A673 (cell line): ENCODE measurements at regions of chr4 and their contacts with region 1.

Region 1: GRCh38 chr4:7987148-7987989 is 47.7 kb upstream of the AFAP1 start:
- DNase-seq: peak; percentile 82
- H3K4me3 ChIP-seq: no peak overlapping the region
- H3K27ac ChIP-seq: no peak overlapping the region
- H3K4me1 ChIP-seq: no peaks in the 10 kb centered on the region
- H3K27me3 ChIP-seq: no peaks in the 10 kb centered on the region
- CTCF ChIP-seq: peak; percentile 90

Region 2: GRCh38 chr4:7719354-7720174 is 267.8 kb before region 1 on chr4:
- CTCF ChIA-PET with region 1: no interaction called
- POLR2A ChIA-PET with region 1: no interaction called
- intact Hi-C with region 1: loop called (anchors 1 kb)
- DNase-seq: peak; percentile 69
- H3K4me3 ChIP-seq: no peak overlapping the region
- H3K27ac ChIP-seq: no peak overlapping the region
- H3K4me1 ChIP-seq: no peaks in the 10 kb centered on the region
- H3K27me3 ChIP-seq: peaks cover 7% of the 10 kb centered on the region
- CTCF ChIP-seq: peak; percentile 91

Region 3: GRCh38 chr4:7761720-7762119 is 225.6 kb before region 1 on chr4:
- CTCF ChIA-PET with region 1: interaction called, 6 read pairs
- POLR2A ChIA-PET with region 1: no interaction called
- intact Hi-C with region 1: loop called (anchors 5 kb)
- DNase-seq: peak; percentile 86
- H3K4me3 ChIP-seq: no peak overlapping the region
- H3K27ac ChIP-seq: peak overlapping the region; percentile 14
- H3K4me1 ChIP-seq: peaks cover 36% of the 10 kb centered on the region
- H3K27me3 ChIP-seq: no peaks in the 10 kb centered on the region
- CTCF ChIP-seq: peak; percentile 82

Region 4: DNA sequence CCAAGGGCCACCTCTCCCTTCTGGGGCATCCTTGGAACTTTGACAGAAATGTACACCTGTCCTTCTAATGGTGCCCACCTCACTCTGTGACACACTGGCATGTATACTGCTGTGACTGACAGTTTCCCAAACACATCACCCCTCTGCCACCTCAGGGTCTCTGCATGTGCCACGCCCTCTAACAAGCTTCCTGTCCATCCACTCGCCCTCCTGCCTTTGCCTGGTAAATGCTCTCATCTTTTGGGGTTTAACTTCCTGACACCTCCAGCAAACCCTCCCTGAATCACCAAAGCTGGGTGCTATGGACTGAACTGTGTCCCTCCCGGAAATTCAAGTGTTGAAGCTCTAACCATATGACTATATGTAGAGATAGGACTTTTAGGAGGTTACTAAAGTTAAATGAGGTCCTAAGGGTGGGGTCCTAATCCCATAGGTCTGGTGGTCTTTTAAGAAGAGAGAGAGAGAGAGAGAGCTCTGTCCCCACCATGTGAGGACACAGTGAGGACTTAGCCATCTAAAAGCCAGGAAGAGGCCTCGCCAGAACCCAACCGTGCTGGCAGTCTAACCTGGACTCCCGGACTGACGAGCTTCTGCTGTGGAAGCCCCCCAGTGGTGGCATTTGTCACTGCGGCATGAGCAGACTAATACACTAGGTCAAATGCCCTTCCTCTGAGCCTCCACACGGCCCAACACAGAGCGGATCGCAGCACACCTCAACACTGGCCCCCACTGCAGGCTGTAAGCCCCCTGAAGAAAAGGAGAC is 143.4 kb before region 1 on chr4:
- CTCF ChIA-PET with region 1: no interaction called
- POLR2A ChIA-PET with region 1: no interaction called
- intact Hi-C with region 1: loop called (anchors 5 kb)
- DNase-seq: peak; percentile 82
- H3K4me3 ChIP-seq: no peak overlapping the region
- H3K27ac ChIP-seq: peak overlapping the region; percentile 21
- H3K4me1 ChIP-seq: peaks cover 5% of the 10 kb centered on the region
- H3K27me3 ChIP-seq: no peaks in the 10 kb centered on the region
- CTCF ChIP-seq: peak; percentile 82